GM12878 (cell line): ENCODE measurements at regions of chr20 and their contacts with region 1.

Region 1: GRCh38 chr20:21360678-21361077 is 36.6 kb downstream of the NKX2-4 start:
- DNase-seq: no peak
- ATAC-seq: no peak
- H3K4me3 ChIP-seq: no peak overlapping the region
- H3K27ac ChIP-seq: no peak overlapping the region
- H3K4me1 ChIP-seq: no peaks in the 10 kb centered on the region
- H3K27me3 ChIP-seq: no peaks in the 10 kb centered on the region
- CTCF ChIP-seq: no peak
- EP300 ChIP-seq: no peak
- POLR2A ChIP-seq: no peak
- RAD21 ChIP-seq: no peak

Region 2: GRCh38 chr20:21342656-21343345 is 17.9 kb before region 1 on chr20:
- CTCF ChIA-PET with region 1: interaction called, 3 read pairs
- POLR2A ChIA-PET with region 1: no interaction called
- RAD21 ChIA-PET with region 1: no interaction called
- SMC1A ChIA-PET with region 1: interaction called, 5 read pairs
- in situ Hi-C with region 1: no loop called
- intact Hi-C with region 1: loop called (anchors 1 kb)
- DNase-seq: no peak
- ATAC-seq: no peak
- H3K4me3 ChIP-seq: no peak overlapping the region
- H3K27ac ChIP-seq: no peak overlapping the region
- H3K4me1 ChIP-seq: no peaks in the 10 kb centered on the region
- H3K27me3 ChIP-seq: no peaks in the 10 kb centered on the region
- CTCF ChIP-seq: no peak
- EP300 ChIP-seq: no peak
- POLR2A ChIP-seq: no peak
- RAD21 ChIP-seq: no peak